HepG2 (cell line): ENCODE measurements at regions of chr6 and their contacts with region 1.

Region 1: DNA sequence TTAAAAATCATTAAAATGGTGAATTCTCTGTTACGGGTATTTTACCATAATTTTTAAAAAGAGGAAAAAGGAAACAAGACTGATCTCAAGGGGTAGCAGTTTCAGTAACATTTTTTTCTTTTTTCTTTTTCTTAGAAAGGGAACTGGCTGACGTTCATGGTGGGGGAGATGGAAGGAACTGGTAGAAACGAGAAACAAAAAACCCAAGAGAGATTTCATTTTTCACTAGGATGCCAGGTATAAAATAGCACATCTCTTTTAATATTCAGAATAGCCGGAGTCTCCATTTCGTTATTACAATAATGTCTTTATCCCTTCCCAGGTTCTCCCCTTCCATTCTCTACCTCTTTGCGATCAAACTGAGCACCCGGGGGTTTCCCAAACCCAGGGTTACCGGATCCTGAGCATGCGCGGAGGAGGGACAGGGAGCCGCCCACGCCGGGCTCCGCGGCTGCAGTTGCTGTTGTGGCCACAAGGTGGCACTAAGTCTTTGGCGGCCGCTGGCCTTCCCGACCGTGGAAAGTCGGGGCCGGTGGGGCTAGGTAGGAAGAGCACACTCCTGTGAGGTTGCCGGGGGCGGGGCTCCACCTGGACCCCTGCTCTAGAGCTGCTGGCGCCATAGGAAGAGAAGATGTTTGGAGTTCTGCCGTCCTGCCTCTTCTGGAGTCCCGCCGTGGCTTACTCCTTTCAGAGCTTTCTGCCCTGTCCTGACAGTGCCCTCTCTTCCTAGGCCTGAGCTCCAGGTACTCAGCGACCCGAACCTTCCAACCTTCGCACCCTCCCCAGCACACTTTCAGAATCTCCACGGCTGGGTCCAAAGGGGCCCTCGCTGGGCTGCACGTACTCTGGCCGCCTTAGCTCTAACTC is 146.8 kb downstream of the SH3BGRL2 start:
- DNase-seq: peak; percentile 43
- ATAC-seq: peak; percentile 94
- H3K4me3 ChIP-seq: peak overlapping the region; percentile 41 to 75 (median 48)
- H3K27ac ChIP-seq: no peak overlapping the region
- H3K4me1 ChIP-seq: peaks cover 18% of the 10 kb centered on the region
- H3K27me3 ChIP-seq: peaks cover 0 to 16% of the 10 kb centered on the region in 2 experiments; a peak in 1 of 5 replicates
- CTCF ChIP-seq: peak; percentile 97
- EP300 ChIP-seq: no peak
- POLR2A ChIP-seq: no peak
- RAD21 ChIP-seq: peak; percentile 65

Region 2: GRCh38 chr6:79981652-79982051 is 203.7 kb after region 1 on chr6:
- CTCF ChIA-PET with region 1: no interaction called
- POLR2A ChIA-PET with region 1: no interaction called
- in situ Hi-C with region 1: no loop called
- intact Hi-C with region 1: no loop called
- DNase-seq: no peak
- ATAC-seq: no peak
- H3K4me3 ChIP-seq: no peak overlapping the region
- H3K27ac ChIP-seq: no peak overlapping the region
- H3K4me1 ChIP-seq: peaks cover 23% of the 10 kb centered on the region
- H3K27me3 ChIP-seq: no peaks in the 10 kb centered on the region; a peak in 1 of 5 replicates
- CTCF ChIP-seq: no peak
- EP300 ChIP-seq: no peak
- POLR2A ChIP-seq: no peak
- RAD21 ChIP-seq: no peak

Region 3: GRCh38 chr6:80094017-80094416 is 316.1 kb after region 1 on chr6:
- CTCF ChIA-PET with region 1: interaction called, 3 read pairs
- POLR2A ChIA-PET with region 1: no interaction called
- in situ Hi-C with region 1: no loop called
- intact Hi-C with region 1: loop called (anchors 1 kb)
- DNase-seq: no peak
- ATAC-seq: no peak
- H3K4me3 ChIP-seq: no peak overlapping the region
- H3K27ac ChIP-seq: no peak overlapping the region
- H3K4me1 ChIP-seq: no peaks in the 10 kb centered on the region
- H3K27me3 ChIP-seq: no peaks in the 10 kb centered on the region
- CTCF ChIP-seq: peak; percentile 61
- EP300 ChIP-seq: no peak
- POLR2A ChIP-seq: no peak
- RAD21 ChIP-seq: peak; percentile 34; the same call in 1 of the 2 replicates